CD8-positive, alpha-beta T cell (primary cell): ENCODE measurements at regions of chr11 and their contacts with region 1.

Region 1: DNA sequence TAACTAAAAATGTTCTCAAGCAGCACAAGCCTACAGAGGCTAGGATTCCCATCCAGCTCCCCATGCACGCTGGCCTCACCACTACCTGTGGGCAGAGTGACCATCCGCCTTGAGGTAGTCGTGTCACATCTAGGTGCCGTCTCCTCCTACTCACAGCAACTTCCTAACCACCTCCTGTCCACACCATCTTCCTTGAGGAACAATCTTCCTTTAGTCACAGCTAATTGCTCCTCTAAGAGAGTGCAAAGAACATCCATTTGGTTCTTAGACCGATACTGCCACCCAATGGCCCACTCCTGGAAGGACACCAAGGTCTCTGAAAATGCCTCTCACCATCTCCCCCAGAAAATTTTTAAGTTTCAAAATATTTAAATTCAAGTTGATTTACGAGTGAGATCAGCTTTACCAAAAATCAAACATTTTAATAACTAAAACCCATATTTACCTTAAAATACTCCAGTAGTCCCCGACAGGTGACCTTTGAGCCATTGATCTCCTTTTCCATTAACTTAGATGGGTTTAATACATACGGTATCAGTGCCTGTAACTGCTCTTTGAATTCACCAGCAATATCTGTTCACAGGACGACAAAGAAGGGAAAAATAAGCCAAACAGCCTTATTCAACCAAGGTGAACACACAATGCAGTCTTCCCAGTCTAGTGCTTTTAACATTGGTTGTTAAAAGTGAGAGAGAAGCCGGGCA is 21.7 kb upstream of the PLAAT3 start:
- DNase-seq: peak; percentile 60 to 82 (median 75)
- ATAC-seq: peak; percentile 89
- H3K4me3 ChIP-seq: no peak overlapping the region
- H3K4me3 Mint-ChIP-seq: no peak overlapping the region
- H3K27ac ChIP-seq: no peak overlapping the region
- H3K27ac Mint-ChIP-seq: no peak overlapping the region
- H3K4me1 ChIP-seq: no peaks in the 10 kb centered on the region
- H3K4me1 Mint-ChIP-seq: peaks cover 8% of the 10 kb centered on the region
- H3K27me3 ChIP-seq: no peaks in the 10 kb centered on the region
- H3K27me3 Mint-ChIP-seq: no peaks in the 10 kb centered on the region
- CTCF ChIP-seq: peak; percentile 93

Region 2: DNA sequence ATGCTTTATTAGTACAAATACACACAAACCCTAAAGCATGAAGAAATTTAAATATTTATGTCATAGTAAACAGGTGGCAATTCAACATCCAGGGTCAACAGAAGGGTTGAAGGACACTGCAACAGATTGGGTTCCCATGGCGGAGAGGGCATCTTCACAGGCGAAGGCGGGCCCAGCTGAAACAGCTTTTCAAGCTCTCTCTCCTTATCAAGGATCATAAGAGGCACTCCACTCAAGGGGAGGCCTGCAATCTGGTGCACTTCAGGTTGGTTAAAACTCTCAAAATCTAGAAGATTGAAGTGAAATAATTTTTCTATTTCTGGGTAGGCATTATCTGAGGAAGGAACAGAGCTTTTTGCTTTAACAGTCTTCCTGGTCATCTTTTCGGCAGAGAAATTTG is 603.5 kb before region 1 on chr11:
- CTCF ChIA-PET with region 1: interaction called, 4 read pairs
- POLR2A ChIA-PET with region 1: no interaction called
- intact Hi-C with region 1: loop called (anchors 2 kb)
- DNase-seq: no peak
- ATAC-seq: no peak
- H3K4me3 ChIP-seq: no peak overlapping the region
- H3K4me3 Mint-ChIP-seq: no peak overlapping the region
- H3K27ac ChIP-seq: no peak overlapping the region
- H3K27ac Mint-ChIP-seq: no peak overlapping the region
- H3K4me1 ChIP-seq: no peaks in the 10 kb centered on the region
- H3K4me1 Mint-ChIP-seq: no peaks in the 10 kb centered on the region
- H3K27me3 ChIP-seq: peaks cover 0 to 3% of the 10 kb centered on the region in 2 experiments
- H3K27me3 Mint-ChIP-seq: peaks cover 30% of the 10 kb centered on the region
- CTCF ChIP-seq: no peak

Region 3: GRCh38 chr11:63536669-63537292 is 99.1 kb before region 1 on chr11 and contains the start of gene PLAAT4:
- CTCF ChIA-PET with region 1: interaction called, 8 read pairs
- POLR2A ChIA-PET with region 1: interaction called, 3 read pairs
- intact Hi-C with region 1: loop called in 1 of 2 experiments (anchors 5 kb)
- DNase-seq: peak in 5 of 9 experiments; percentile 21 to 81 (median 65)
- ATAC-seq: peak; percentile 53
- H3K4me3 ChIP-seq: peak within 1 kb of the TSS; percentile 71 to 85
- H3K4me3 Mint-ChIP-seq: peak within 1 kb of the TSS; percentile 92
- H3K27ac ChIP-seq: peak within 1 kb of the TSS; percentile 83 to 84
- H3K27ac Mint-ChIP-seq: peak within 1 kb of the TSS; percentile 97
- H3K4me1 ChIP-seq: peaks cover 84% of the 10 kb centered on the region
- H3K4me1 Mint-ChIP-seq: peaks cover 85% of the 10 kb centered on the region
- H3K27me3 ChIP-seq: no peaks in the 10 kb centered on the region
- H3K27me3 Mint-ChIP-seq: no peaks in the 10 kb centered on the region
- CTCF ChIP-seq: no peak
- total RNA-seq, gene PLAAT4: 81.9 to 84.0 TPM

Region 4: DNA sequence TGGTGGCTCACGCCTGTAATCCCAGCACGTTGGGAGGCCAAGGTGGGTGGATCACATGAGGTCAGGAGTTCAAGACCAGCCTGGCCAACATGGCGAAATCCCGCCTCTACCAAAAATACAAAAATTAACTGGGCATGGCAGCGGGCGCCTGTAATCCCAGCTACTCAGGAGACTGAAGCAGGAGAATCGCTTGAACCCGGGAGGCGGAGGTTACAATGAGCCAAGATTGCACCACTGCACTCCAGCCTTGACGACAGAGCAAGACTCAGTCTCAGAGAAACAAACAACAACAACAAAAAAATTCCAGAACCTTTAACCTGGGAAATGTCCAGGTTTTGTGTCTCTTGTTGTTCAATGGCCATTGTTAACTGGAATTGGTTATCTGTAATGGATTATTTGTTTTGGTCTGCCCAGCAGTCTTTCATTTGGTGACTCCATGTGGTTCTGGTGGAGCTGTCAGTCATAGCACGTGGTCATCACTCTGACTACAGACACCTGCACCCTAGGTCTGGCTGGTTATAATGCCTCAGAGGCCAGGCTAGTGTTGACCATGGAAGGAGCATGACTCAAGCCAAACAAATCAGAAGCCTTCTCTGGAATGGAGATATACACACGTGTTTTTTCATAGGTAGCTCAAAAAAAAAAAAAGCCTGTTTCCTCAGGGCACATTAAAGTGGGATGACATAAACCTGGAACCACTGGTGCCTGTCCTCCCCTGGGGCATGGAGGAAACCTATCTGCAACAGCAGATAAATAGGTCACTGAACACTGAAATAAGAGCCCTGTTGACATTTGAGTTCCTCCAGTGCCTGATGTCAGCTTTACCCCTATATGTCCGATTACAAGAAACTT is 13.8 kb before region 1 on chr11:
- CTCF ChIA-PET with region 1: interaction called, 11 read pairs
- POLR2A ChIA-PET with region 1: interaction called, 4 read pairs
- intact Hi-C with region 1: no loop called
- DNase-seq: no peak
- ATAC-seq: no peak
- H3K4me3 ChIP-seq: no peak overlapping the region
- H3K4me3 Mint-ChIP-seq: no peak overlapping the region
- H3K27ac ChIP-seq: no peak overlapping the region
- H3K27ac Mint-ChIP-seq: no peak overlapping the region
- H3K4me1 ChIP-seq: peaks cover 6% of the 10 kb centered on the region
- H3K4me1 Mint-ChIP-seq: peaks cover 7% of the 10 kb centered on the region
- H3K27me3 ChIP-seq: no peaks in the 10 kb centered on the region
- H3K27me3 Mint-ChIP-seq: no peaks in the 10 kb centered on the region
- CTCF ChIP-seq: no peak

Region 5: GRCh38 chr11:63738720-63739360 is 102.9 kb after region 1 on chr11:
- CTCF ChIA-PET with region 1: interaction called, 58 read pairs
- POLR2A ChIA-PET with region 1: no interaction called
- intact Hi-C with region 1: loop called (anchors 1 to 2 kb)
- DNase-seq: peak; percentile 25 to 76 (median 66)
- ATAC-seq: no peak
- H3K4me3 ChIP-seq: no peak overlapping the region
- H3K4me3 Mint-ChIP-seq: no peak overlapping the region
- H3K27ac ChIP-seq: no peak overlapping the region
- H3K27ac Mint-ChIP-seq: no peak overlapping the region
- H3K4me1 ChIP-seq: no peaks in the 10 kb centered on the region
- H3K4me1 Mint-ChIP-seq: peaks cover 2% of the 10 kb centered on the region
- H3K27me3 ChIP-seq: no peaks in the 10 kb centered on the region
- H3K27me3 Mint-ChIP-seq: no peaks in the 10 kb centered on the region
- CTCF ChIP-seq: peak; percentile 100

Region 6: DNA sequence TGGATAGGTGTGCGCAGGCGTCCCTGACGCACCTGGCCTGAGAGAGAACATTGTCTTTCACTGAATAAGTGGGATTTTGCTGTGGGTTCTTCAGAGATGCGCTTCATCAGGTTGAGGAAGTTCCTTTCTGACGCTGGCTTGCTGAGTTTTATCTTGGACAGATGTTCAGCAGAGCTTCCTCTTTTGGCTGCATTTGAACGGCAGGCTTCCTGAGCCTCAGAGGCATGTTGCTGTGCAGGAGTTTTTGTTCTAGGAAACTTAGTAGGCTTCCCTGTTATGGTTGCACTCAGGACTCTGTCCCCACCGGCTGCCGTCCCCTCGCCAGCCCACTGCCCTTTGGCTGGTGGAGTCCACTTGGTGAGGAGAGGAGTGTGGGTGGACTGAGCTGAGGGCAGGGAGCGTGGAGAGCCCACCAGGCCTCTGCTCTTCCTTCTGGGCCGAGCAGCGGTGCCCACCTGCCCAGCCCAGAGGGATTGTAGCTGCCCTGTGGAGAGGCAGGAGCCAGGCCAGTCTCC is 1767.8 kb after region 1 on chr11:
- CTCF ChIA-PET with region 1: no interaction called
- POLR2A ChIA-PET with region 1: no interaction called
- intact Hi-C with region 1: no loop called
- DNase-seq: peak in 2 of 9 experiments; percentile 15 to 34
- ATAC-seq: no peak
- H3K4me3 ChIP-seq: no peak overlapping the region
- H3K4me3 Mint-ChIP-seq: no peak overlapping the region
- H3K27ac ChIP-seq: no peak overlapping the region
- H3K27ac Mint-ChIP-seq: peak overlapping the region; percentile 64
- H3K4me1 ChIP-seq: no peaks in the 10 kb centered on the region
- H3K4me1 Mint-ChIP-seq: peaks cover 5% of the 10 kb centered on the region
- H3K27me3 ChIP-seq: no peaks in the 10 kb centered on the region
- H3K27me3 Mint-ChIP-seq: no peaks in the 10 kb centered on the region
- CTCF ChIP-seq: no peak